CD4-positive, alpha-beta memory T cell (primary cell): ENCODE measurements at regions of chr17 and their contacts with region 1.

Region 1: GRCh38 chr17:8222630-8223356 is 12.4 kb upstream of the AURKB start:
- DNase-seq: peak; percentile 88 to 91 (median 90)
- H3K4me3 ChIP-seq: peak overlapping the region; percentile 63 to 99
- H3K4me3 Mint-ChIP-seq: peak overlapping the region; percentile 93 to 98 (median 94)
- H3K27ac ChIP-seq: peak overlapping the region; percentile 89
- H3K27ac Mint-ChIP-seq: peak overlapping the region; percentile 97 to 100 (median 98)
- H3K4me1 ChIP-seq: peaks cover 51% of the 10 kb centered on the region
- H3K4me1 Mint-ChIP-seq: peaks cover 36 to 85% (median 69%) of the 10 kb centered on the region in 4 donors
- H3K27me3 ChIP-seq: no peaks in the 10 kb centered on the region
- H3K27me3 Mint-ChIP-seq: peaks cover 4 to 21% of the 10 kb centered on the region in 2 donors

Region 2: DNA sequence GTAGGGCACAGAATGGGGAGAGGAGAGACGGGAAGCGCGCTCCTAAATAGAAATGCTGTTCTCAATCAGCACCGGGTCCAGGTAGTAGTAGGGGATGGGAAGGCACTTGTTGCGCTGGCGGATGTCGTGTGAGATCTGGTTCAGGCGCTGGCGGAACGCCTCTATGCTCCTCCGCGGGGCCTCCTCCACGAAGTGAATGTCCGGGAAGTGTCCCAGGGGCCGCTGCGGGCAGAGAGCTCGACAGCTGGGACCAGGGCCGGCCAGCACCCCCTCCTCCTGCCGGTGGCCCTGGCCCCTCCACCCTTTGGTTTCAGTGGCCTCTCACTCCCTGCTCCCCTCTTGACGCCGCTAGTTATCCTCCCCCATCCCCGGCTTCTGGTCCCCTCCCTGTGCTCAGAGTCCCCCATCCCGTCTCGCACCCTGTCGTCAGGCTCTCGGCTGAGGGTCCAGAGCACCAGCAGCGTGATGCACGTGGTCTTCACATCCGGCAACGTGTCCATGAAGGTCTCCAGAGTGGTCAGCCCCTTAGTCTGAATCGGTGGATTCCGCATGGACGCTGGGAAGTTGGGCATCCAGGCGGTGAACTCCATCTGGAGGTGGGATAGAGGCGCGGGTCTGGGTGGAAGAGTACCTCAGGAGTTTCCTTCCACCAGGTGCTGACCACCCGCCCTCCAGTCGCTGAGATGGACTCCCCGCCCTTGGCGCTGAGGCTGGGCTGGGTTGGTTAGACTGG is 149.9 kb before region 1 on chr17:
- CTCF ChIA-PET with region 1: no interaction called
- POLR2A ChIA-PET with region 1: no interaction called
- intact Hi-C with region 1: no loop called
- DNase-seq: peak in 4 of 5 donors; percentile 26 to 49 (median 36)
- H3K4me3 ChIP-seq: peak overlapping the region in 1 of 2 donors; percentile 33
- H3K4me3 Mint-ChIP-seq: peak overlapping the region; percentile 74 to 97 (median 85)
- H3K27ac ChIP-seq: no peak overlapping the region
- H3K27ac Mint-ChIP-seq: peak overlapping the region in 3 of 7 donors; percentile 27 to 76 (median 65)
- H3K4me1 ChIP-seq: peaks cover 23% of the 10 kb centered on the region
- H3K4me1 Mint-ChIP-seq: peaks cover 15 to 29% (median 23%) of the 10 kb centered on the region in 4 donors
- H3K27me3 ChIP-seq: peaks cover 24% of the 10 kb centered on the region
- H3K27me3 Mint-ChIP-seq: peaks cover 12 to 20% of the 10 kb centered on the region in 2 donors

Region 3: GRCh38 chr17:8151123-8151640 is 71.6 kb before region 1 on chr17:
- CTCF ChIA-PET with region 1: no interaction called
- POLR2A ChIA-PET with region 1: interaction called, 240 read pairs
- intact Hi-C with region 1: loop called (anchors 1 kb)
- DNase-seq: peak; percentile 92 to 96 (median 94)
- H3K4me3 ChIP-seq: peak overlapping the region; percentile 74 to 89
- H3K4me3 Mint-ChIP-seq: peak overlapping the region in 7 of 8 donors; percentile 91 to 98 (median 93)
- H3K27ac ChIP-seq: peak overlapping the region; percentile 100
- H3K27ac Mint-ChIP-seq: no peak overlapping the region
- H3K4me1 ChIP-seq: peaks cover 54% of the 10 kb centered on the region
- H3K4me1 Mint-ChIP-seq: peaks cover 30 to 58% (median 39%) of the 10 kb centered on the region in 4 donors
- H3K27me3 ChIP-seq: no peaks in the 10 kb centered on the region
- H3K27me3 Mint-ChIP-seq: no peaks in the 10 kb centered on the region

Region 4: DNA sequence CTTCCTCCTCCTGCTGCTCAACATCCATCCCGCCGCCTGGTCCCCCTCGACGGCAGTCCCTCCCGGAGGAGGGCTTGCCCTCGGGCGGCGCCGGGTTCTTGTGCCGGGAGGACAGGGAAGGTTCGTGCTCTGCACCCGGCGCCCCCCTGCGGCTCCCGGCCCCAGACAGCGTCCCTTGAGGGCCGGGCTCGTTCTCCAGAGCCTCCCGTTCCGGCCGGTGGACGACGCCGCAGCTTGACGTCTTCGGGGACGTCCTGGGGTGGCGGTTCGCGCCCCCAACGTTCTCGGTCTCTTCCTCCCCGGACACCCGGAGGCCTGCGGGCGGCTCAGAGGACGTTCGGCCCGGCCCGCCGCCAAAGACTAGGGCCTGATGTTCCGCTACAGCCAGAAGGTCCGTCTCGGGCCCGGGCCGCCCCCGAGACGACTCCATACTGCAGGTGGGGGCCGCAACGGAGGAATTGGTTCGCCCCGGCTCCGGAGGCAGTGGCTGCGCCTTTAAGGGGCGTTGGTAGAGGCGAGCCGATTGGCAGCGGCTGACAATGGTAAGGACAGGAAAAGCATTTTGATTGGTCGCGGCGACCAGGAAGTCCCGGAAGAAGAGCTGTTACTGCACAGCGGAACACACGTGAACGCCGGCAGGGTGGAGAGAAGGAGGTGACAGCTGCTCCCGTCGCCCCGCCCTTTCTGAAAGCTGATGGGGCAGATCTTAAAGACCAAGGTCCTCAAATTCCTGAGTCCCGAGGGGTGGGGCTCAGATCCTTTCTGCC is 32.9 kb before region 1 on chr17 and contains the start of gene BORCS6:
- CTCF ChIA-PET with region 1: interaction called, 72 read pairs
- POLR2A ChIA-PET with region 1: interaction called, 598 read pairs
- intact Hi-C with region 1: loop called (anchors 1 kb)
- DNase-seq: peak; percentile 93 to 98 (median 96)
- H3K4me3 ChIP-seq: peak within 1 kb of the TSS; percentile 76 to 100
- H3K4me3 Mint-ChIP-seq: peak within 1 kb of the TSS in 5 of 8 donors; percentile 13 to 92 (median 41)
- H3K27ac ChIP-seq: peak within 1 kb of the TSS; percentile 82
- H3K27ac Mint-ChIP-seq: peak within 1 kb of the TSS in 5 of 7 donors; percentile 78 to 94 (median 91)
- H3K4me1 ChIP-seq: peaks cover 44% of the 10 kb centered on the region
- H3K4me1 Mint-ChIP-seq: peaks cover 7 to 15% (median 13%) of the 10 kb centered on the region in 4 donors
- H3K27me3 ChIP-seq: no peaks in the 10 kb centered on the region
- H3K27me3 Mint-ChIP-seq: no peaks in the 10 kb centered on the region
- total RNA-seq, gene BORCS6: 19.2 to 19.4 TPM

Region 5: GRCh38 chr17:8237175-8237574 is 14.4 kb after region 1 on chr17:
- CTCF ChIA-PET with region 1: interaction called, 5 read pairs
- POLR2A ChIA-PET with region 1: interaction called, 611 read pairs
- intact Hi-C with region 1: no loop called
- DNase-seq: no peak
- H3K4me3 ChIP-seq: no peak overlapping the region
- H3K4me3 Mint-ChIP-seq: no peak overlapping the region
- H3K27ac ChIP-seq: no peak overlapping the region
- H3K27ac Mint-ChIP-seq: peak overlapping the region in 2 of 7 donors; percentile 64 to 79
- H3K4me1 ChIP-seq: peaks cover 16% of the 10 kb centered on the region
- H3K4me1 Mint-ChIP-seq: peaks cover 21 to 37% (median 28%) of the 10 kb centered on the region in 4 donors
- H3K27me3 ChIP-seq: no peaks in the 10 kb centered on the region
- H3K27me3 Mint-ChIP-seq: no peaks in the 10 kb centered on the region

Region 6: GRCh38 chr17:8288336-8289102 is 65.7 kb after region 1 on chr17 and contains the start of gene RANGRF:
- CTCF ChIA-PET with region 1: interaction called, 3 read pairs
- POLR2A ChIA-PET with region 1: interaction called, 107 read pairs
- intact Hi-C with region 1: loop called (anchors 1 kb)
- DNase-seq: peak; percentile 70 to 83 (median 73)
- H3K4me3 ChIP-seq: peak within 1 kb of the TSS; percentile 88 to 98
- H3K4me3 Mint-ChIP-seq: peak within 1 kb of the TSS; percentile 93 to 98 (median 97)
- H3K27ac ChIP-seq: peak within 1 kb of the TSS; percentile 83
- H3K27ac Mint-ChIP-seq: peak within 1 kb of the TSS; percentile 94 to 98 (median 97)
- H3K4me1 ChIP-seq: peaks cover 49% of the 10 kb centered on the region
- H3K4me1 Mint-ChIP-seq: peaks cover 23 to 69% (median 44%) of the 10 kb centered on the region in 4 donors
- H3K27me3 ChIP-seq: no peaks in the 10 kb centered on the region
- H3K27me3 Mint-ChIP-seq: no peaks in the 10 kb centered on the region
- total RNA-seq, gene RANGRF: 39.7 to 42.8 TPM

Region 7: GRCh38 chr17:8383143-8383822 is 160.5 kb after region 1 on chr17 and contains the start of gene RPL26:
- CTCF ChIA-PET with region 1: no interaction called
- POLR2A ChIA-PET with region 1: no interaction called
- intact Hi-C with region 1: loop called (anchors 5 kb)
- DNase-seq: peak; percentile 96 to 98 (median 97)
- H3K4me3 ChIP-seq: peak within 1 kb of the TSS; percentile 74 to 95
- H3K4me3 Mint-ChIP-seq: peak within 1 kb of the TSS; percentile 95 to 99 (median 97)
- H3K27ac ChIP-seq: peak within 1 kb of the TSS; percentile 77
- H3K27ac Mint-ChIP-seq: peak within 1 kb of the TSS; percentile 94 to 97 (median 96)
- H3K4me1 ChIP-seq: peaks cover 49% of the 10 kb centered on the region
- H3K4me1 Mint-ChIP-seq: peaks cover 36 to 82% (median 54%) of the 10 kb centered on the region in 4 donors
- H3K27me3 ChIP-seq: no peaks in the 10 kb centered on the region
- H3K27me3 Mint-ChIP-seq: no peaks in the 10 kb centered on the region
- total RNA-seq, gene RPL26: 2,761 to 2,878 TPM

Region 8: GRCh38 chr17:8393420-8394241 is 170.8 kb after region 1 on chr17:
- CTCF ChIA-PET with region 1: no interaction called
- POLR2A ChIA-PET with region 1: no interaction called
- intact Hi-C with region 1: no loop called
- DNase-seq: peak; percentile 40 to 77 (median 56)
- H3K4me3 ChIP-seq: no peak overlapping the region
- H3K4me3 Mint-ChIP-seq: peak overlapping the region in 5 of 8 donors; percentile 46 to 68 (median 60)
- H3K27ac ChIP-seq: no peak overlapping the region
- H3K27ac Mint-ChIP-seq: peak overlapping the region; percentile 64 to 96 (median 93)
- H3K4me1 ChIP-seq: peaks cover 19% of the 10 kb centered on the region
- H3K4me1 Mint-ChIP-seq: peaks cover 9 to 15% (median 10%) of the 10 kb centered on the region in 4 donors
- H3K27me3 ChIP-seq: peaks cover 4% of the 10 kb centered on the region
- H3K27me3 Mint-ChIP-seq: peaks cover 6 to 13% of the 10 kb centered on the region in 2 donors

Region 9: GRCh38 chr17:8420041-8420934 is 197.5 kb after region 1 on chr17:
- CTCF ChIA-PET with region 1: no interaction called
- POLR2A ChIA-PET with region 1: no interaction called
- intact Hi-C with region 1: no loop called
- DNase-seq: no peak
- H3K4me3 ChIP-seq: no peak overlapping the region
- H3K4me3 Mint-ChIP-seq: no peak overlapping the region
- H3K27ac ChIP-seq: no peak overlapping the region
- H3K27ac Mint-ChIP-seq: no peak overlapping the region
- H3K4me1 ChIP-seq: no peaks in the 10 kb centered on the region
- H3K4me1 Mint-ChIP-seq: peaks cover 0 to 2% (median 0%) of the 10 kb centered on the region in 4 donors
- H3K27me3 ChIP-seq: peaks cover 5% of the 10 kb centered on the region
- H3K27me3 Mint-ChIP-seq: peaks cover 27 to 30% of the 10 kb centered on the region in 2 donors